ENCODE measurements at regions of chr6 and their contacts with region 1.

Region 1: GRCh38 chr6:77587963-77588362 is 64.9 kb upstream of the MEI4 start:
- DNase-seq: no peak
- ATAC-seq: no peak
- H3K4me3 ChIP-seq: no peak overlapping the region
- H3K27ac ChIP-seq: no peak overlapping the region
- H3K4me1 ChIP-seq: no peaks in the 10 kb centered on the region
- H3K27me3 ChIP-seq: no peaks in the 10 kb centered on the region
- CTCF ChIP-seq: no peak

Region 2: DNA sequence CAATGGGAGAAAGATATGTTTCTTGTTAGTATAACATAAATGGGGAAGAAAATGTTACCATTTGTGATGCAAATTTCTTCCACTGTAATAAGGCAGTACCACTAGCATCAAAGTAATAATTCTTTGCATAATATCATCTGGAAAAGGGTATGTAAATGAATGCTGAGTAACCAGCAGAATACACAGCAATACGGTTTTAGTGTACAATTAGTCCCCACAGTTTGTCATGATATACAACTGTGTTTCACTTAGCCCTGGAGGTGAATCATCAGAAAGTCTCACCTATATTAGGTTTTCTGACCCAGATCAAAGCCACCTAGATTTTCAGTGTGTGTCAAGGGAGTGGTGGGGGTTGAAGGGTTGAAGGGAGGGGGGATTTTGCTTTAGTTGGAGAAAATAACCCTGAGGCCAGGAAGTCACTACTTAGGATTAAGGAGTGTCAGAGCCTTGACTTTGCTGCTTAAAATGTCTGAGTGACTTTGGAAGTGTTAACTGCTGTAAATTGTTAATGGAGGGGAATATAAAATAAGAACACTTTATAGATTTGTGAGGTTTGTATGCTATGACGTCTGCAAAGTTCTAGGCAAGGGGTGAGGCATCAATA is 56.2 kb after region 1 on chr6:
- intact Hi-C with region 1: loop called in 1 of 2 experiments (anchors 2 kb)
- DNase-seq: no peak
- ATAC-seq: no peak
- H3K4me3 ChIP-seq: no peak overlapping the region
- H3K27ac ChIP-seq: no peak overlapping the region
- H3K4me1 ChIP-seq: no peaks in the 10 kb centered on the region
- H3K27me3 ChIP-seq: no peaks in the 10 kb centered on the region
- CTCF ChIP-seq: no peak

Region 3: GRCh38 chr6:78153976-78154375 is 566.0 kb after region 1 on chr6:
- intact Hi-C with region 1: no loop called
- DNase-seq: no peak
- ATAC-seq: no peak
- H3K4me3 ChIP-seq: no peak overlapping the region
- H3K27ac ChIP-seq: no peak overlapping the region
- H3K4me1 ChIP-seq: no peaks in the 10 kb centered on the region
- H3K27me3 ChIP-seq: no peaks in the 10 kb centered on the region
- CTCF ChIP-seq: no peak